ENCODE measurements at regions of chr5 and their contacts with region 1.

Region 1: GRCh38 chr5:40333459-40334244 is 346.1 kb upstream of the PTGER4 start:
- DNase-seq: peak in 1 of 2 donors; percentile 10
- ATAC-seq: peak; percentile 60 to 86 (median 75)
- H3K4me3 ChIP-seq: no peak overlapping the region
- H3K4me3 Mint-ChIP-seq: no peak overlapping the region
- H3K27ac ChIP-seq: no peak overlapping the region
- H3K27ac Mint-ChIP-seq: peak overlapping the region in 1 of 2 donors; percentile 26
- H3K4me1 ChIP-seq: peaks cover 17% of the 10 kb centered on the region
- H3K4me1 Mint-ChIP-seq: peaks cover 43% of the 10 kb centered on the region in 2 donors
- H3K27me3 ChIP-seq: no peaks in the 10 kb centered on the region
- H3K27me3 Mint-ChIP-seq: no peaks in the 10 kb centered on the region
- CTCF ChIP-seq: no peak

Region 2: GRCh38 chr5:40378396-40379177 is 44.9 kb after region 1 on chr5:
- intact Hi-C with region 1: loop called (anchors 5 kb)
- DNase-seq: peak in 1 of 2 donors; percentile 68
- ATAC-seq: peak; percentile 79 to 88 (median 80)
- H3K4me3 ChIP-seq: no peak overlapping the region
- H3K4me3 Mint-ChIP-seq: peak overlapping the region; percentile 43
- H3K27ac ChIP-seq: peak overlapping the region; percentile 73
- H3K27ac Mint-ChIP-seq: peak overlapping the region; percentile 79 to 90
- H3K4me1 ChIP-seq: peaks cover 11% of the 10 kb centered on the region
- H3K4me1 Mint-ChIP-seq: peaks cover 29 to 31% of the 10 kb centered on the region in 2 donors
- H3K27me3 ChIP-seq: no peaks in the 10 kb centered on the region
- H3K27me3 Mint-ChIP-seq: peaks cover 0 to 6% of the 10 kb centered on the region in 2 donors
- CTCF ChIP-seq: no peak

Region 3: DNA sequence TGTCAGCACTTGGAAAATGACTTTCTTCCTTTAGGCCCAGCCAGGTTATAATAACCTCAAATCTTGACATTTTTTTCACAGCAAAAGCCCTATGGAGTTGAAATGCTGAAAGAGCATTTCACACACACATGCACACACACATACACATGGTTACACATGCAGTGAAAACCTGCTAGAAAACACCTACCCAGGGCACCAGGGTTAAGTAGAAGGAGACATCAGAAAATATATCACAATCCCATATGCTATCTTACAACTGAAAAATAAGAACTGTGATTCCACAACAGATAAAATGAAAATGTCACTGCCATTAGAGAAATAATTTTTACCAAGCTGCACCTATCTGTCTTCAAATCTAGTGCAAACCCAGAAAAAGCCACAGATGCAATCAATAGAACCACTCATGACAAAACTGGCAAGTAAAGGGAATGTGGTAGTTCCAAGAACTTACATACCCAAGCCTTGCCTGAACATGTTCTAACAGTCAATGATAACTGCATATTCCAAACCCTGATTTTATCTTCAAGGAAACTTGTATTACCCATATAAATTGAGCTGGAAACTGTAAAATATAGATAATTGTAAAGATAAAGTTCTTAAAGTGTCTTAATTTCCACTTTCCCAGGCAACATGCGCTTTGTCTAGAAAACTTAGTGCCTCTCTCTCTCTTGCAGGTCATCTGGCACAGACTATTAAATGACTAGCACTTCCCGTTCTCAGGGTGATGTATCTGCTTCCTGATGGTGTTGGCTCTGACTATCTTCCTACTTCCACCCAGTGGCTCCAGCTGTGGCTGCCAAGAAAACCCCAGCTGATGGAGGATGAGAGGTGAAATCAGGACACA is 95.8 kb after region 1 on chr5:
- intact Hi-C with region 1: no loop called
- DNase-seq: peak in 1 of 2 donors; percentile 50
- ATAC-seq: peak; percentile 35 to 75 (median 55)
- H3K4me3 ChIP-seq: no peak overlapping the region
- H3K4me3 Mint-ChIP-seq: peak overlapping the region; percentile 55
- H3K27ac ChIP-seq: no peak overlapping the region
- H3K27ac Mint-ChIP-seq: peak overlapping the region; percentile 65 to 90
- H3K4me1 ChIP-seq: peaks cover 6% of the 10 kb centered on the region
- H3K4me1 Mint-ChIP-seq: peaks cover 53 to 55% of the 10 kb centered on the region in 2 donors
- H3K27me3 ChIP-seq: no peaks in the 10 kb centered on the region
- H3K27me3 Mint-ChIP-seq: no peaks in the 10 kb centered on the region
- CTCF ChIP-seq: no peak

Measured in natural killer cell (primary cell).